ENCODE measurements at regions of chr2 and their contacts with region 1.

Region 1: DNA sequence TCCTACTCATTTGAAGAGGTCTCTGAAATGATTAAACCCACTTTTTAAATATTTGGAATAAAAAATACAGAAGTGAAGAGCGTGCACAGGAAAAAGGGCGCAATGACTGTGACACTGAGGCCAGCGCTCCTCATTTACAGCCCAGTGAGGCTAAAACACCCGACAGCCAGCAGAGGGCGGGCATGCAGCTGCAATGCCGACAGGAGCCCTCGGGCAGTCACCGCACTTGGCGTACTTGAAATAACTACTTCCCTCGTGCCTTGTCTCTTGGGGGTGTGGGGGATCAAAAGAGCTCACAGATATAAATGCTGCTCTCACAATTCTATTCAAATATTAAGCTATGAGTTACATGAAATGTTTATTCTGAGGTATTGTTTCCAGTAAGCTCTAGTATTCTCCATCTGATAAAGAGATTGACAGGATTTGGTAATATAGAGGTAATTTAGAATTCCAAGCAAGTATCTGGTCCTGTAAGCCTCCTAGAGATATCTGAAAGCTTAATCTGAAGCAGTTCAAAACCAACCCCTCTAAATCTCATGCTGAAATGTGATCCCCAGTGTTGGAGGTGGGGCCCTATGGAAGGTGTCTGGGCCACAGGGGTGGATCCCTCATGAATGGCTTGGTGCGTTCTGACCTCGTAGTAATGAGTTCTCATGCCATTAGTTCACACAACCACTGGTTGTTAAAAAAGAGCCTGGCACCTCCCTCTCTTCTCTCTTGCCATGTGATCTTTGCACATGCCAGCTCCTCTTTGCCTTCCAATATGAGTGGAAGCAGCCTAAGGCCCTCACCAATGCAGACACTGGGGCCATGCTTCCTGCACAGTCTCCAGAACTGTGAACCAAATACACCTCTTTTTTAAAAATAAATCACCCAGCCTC is 93.6 kb downstream of the ZAP70 start:
- DNase-seq: peak; percentile 71

Region 2: DNA sequence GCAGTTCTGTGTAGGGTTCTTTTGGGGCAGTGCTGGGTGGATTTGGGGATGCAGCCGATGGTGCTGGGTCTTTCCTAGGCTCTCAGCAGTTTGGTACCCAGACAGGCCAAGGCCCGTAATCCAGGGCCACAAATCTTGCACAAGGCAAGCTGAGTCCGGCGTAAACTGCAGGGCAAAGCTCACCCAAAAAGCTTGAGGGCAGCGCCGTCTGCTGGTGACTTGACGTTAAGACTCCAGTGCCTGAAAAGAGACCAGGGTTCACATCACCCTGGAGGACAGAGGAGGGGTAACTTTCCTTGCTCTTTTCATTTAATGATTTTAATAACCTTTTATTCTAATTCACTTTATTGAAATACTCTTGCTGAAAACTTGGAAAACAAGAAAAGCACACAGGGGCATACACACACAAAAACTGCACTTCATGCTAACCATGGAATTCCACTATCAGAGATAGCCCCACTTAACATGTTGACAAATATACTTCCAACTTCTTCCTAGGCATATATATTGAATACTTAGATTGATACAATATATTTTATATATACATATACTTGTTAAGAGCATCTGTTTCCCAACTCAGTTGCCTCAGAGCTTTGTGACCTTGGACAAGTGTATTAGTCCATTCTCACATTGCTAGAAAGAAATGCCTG is 578.2 kb after region 1 on chr2:
- in situ Hi-C with region 1: loop called (anchors 25 kb)
- DNase-seq: peak; percentile 76

Measured in KBM-7 (cell line).